GM12878 (cell line): ENCODE measurements at regions of chr2 and their contacts with region 1.

Region 1: GRCh38 chr2:190713471-190713870 is 64.6 kb downstream of the NAB1 start:
- DNase-seq: no peak
- ATAC-seq: no peak
- H3K4me3 ChIP-seq: no peak overlapping the region
- H3K27ac ChIP-seq: no peak overlapping the region
- H3K4me1 ChIP-seq: peaks cover 2% of the 10 kb centered on the region; the same call in 1 of the 2 replicates
- H3K27me3 ChIP-seq: no peaks in the 10 kb centered on the region
- CTCF ChIP-seq: no peak
- EP300 ChIP-seq: no peak
- POLR2A ChIP-seq: no peak
- RAD21 ChIP-seq: no peak

Region 2: DNA sequence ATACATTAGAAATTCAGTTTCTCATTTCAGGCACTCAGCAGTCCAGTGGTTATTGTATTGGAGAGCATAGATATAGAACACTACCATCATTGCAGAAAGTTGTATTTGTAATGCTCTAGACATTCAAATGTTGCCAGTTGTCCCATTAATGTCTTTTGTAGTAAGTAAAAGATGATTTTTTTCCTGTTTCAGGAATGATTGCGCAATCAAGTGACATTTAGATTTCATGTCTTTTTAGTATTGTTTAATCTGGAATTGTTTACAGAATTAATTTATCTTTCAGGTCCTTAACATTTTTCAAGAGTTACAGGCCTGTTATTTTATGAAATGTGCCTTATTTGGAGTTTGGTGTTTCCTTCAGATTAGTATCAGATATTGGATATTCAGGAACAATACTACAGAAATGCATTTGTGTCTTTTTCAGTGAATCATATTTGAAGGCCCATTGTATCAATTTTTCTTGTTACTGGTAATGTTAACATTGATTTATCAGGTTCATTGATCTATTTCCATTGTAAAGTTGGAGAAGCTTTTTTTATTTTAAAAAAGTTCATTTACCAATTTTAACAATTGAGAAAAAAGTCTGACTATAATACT is 785.5 kb before region 1 on chr2:
- CTCF ChIA-PET with region 1: no interaction called
- POLR2A ChIA-PET with region 1: no interaction called
- RAD21 ChIA-PET with region 1: no interaction called
- SMC1A ChIA-PET with region 1: no interaction called
- in situ Hi-C with region 1: no loop called
- intact Hi-C with region 1: no loop called
- DNase-seq: no peak
- ATAC-seq: no peak
- H3K4me3 ChIP-seq: no peak overlapping the region
- H3K27ac ChIP-seq: no peak overlapping the region
- H3K4me1 ChIP-seq: 0 out of 2 replicates have a peak, but pooled peaks cover 5% of the 10 kb centered on the region
- H3K27me3 ChIP-seq: no peaks in the 10 kb centered on the region
- CTCF ChIP-seq: no peak
- EP300 ChIP-seq: no peak
- POLR2A ChIP-seq: no peak
- RAD21 ChIP-seq: no peak

Region 3: DNA sequence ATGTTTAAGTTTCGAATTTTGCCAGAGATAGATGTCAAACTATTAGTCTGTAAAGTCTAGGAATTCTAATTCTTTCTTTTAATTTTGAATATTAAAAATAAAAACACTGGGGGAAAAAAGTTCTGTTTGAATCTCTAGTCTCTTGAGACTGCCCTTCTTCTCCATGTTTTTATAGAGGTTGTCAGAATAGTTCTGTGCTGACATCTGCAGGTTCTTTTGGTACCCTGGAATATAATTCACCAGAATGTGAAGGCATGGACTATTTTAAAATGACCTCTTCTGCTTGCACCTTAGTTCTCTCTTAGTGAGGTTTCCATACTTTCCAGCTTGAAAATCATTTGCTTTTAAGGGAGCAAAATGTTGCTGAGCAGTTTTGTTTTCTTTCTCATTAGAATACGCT is 529.9 kb before region 1 on chr2:
- CTCF ChIA-PET with region 1: no interaction called
- POLR2A ChIA-PET with region 1: no interaction called
- RAD21 ChIA-PET with region 1: no interaction called
- SMC1A ChIA-PET with region 1: no interaction called
- in situ Hi-C with region 1: no loop called
- intact Hi-C with region 1: no loop called
- DNase-seq: no peak
- ATAC-seq: no peak
- H3K4me3 ChIP-seq: no peak overlapping the region
- H3K27ac ChIP-seq: no peak overlapping the region
- H3K4me1 ChIP-seq: peaks cover 16% of the 10 kb centered on the region
- H3K27me3 ChIP-seq: no peaks in the 10 kb centered on the region
- CTCF ChIP-seq: no peak; a peak in 1 of 6 replicates
- EP300 ChIP-seq: no peak
- POLR2A ChIP-seq: no peak
- RAD21 ChIP-seq: no peak

Region 4: GRCh38 chr2:190698895-190699294 is 14.6 kb before region 1 on chr2:
- CTCF ChIA-PET with region 1: interaction called, 13 read pairs
- POLR2A ChIA-PET with region 1: interaction called, 53 read pairs
- RAD21 ChIA-PET with region 1: interaction called, 96 read pairs
- SMC1A ChIA-PET with region 1: interaction called, 137 read pairs
- in situ Hi-C with region 1: no loop called
- intact Hi-C with region 1: loop called (anchors 2 kb)
- DNase-seq: no peak
- ATAC-seq: no peak
- H3K4me3 ChIP-seq: no peak overlapping the region
- H3K27ac ChIP-seq: no peak overlapping the region
- H3K4me1 ChIP-seq: peaks cover 25% of the 10 kb centered on the region
- H3K27me3 ChIP-seq: no peaks in the 10 kb centered on the region
- CTCF ChIP-seq: no peak
- EP300 ChIP-seq: no peak
- POLR2A ChIP-seq: no peak
- RAD21 ChIP-seq: no peak